Right ventricle myocardium inferior (tissue), 1 donor: ENCODE measurements at regions of chr6 and their contacts with region 1.

Region 1: GRCh38 chr6:4682431-4683097 is 93.6 kb upstream of the CDYL start:
- DNase-seq: no peak
- ATAC-seq: no peak

Region 2: GRCh38 chr6:4585682-4586468 is 96.7 kb before region 1 on chr6:
- intact Hi-C with region 1: loop called (anchors 5 kb)
- DNase-seq: no peak
- ATAC-seq: no peak